HepG2 (cell line): ENCODE measurements at regions of chr16 and their contacts with region 1.

Region 1: GRCh38 chr16:56950881-56951771 is 10.6 kb upstream of the CETP start:
- DNase-seq: peak; percentile 61
- ATAC-seq: peak; percentile 72
- H3K4me3 ChIP-seq: peak overlapping the region in 1 of 3 experiments; percentile 15; a peak in 1 of 6 replicates
- H3K27ac ChIP-seq: no peak overlapping the region
- H3K4me1 ChIP-seq: peaks cover 53% of the 10 kb centered on the region
- H3K27me3 ChIP-seq: no peaks in the 10 kb centered on the region
- CTCF ChIP-seq: peak; percentile 98
- EP300 ChIP-seq: no peak
- POLR2A ChIP-seq: no peak
- RAD21 ChIP-seq: peak; percentile 90

Region 2: GRCh38 chr16:56866943-56867830 is 83.9 kb before region 1 on chr16:
- CTCF ChIA-PET with region 1: interaction called, 20 read pairs
- POLR2A ChIA-PET with region 1: no interaction called
- in situ Hi-C with region 1: loop called (anchors 5 kb)
- intact Hi-C with region 1: loop called (anchors 1 kb)
- DNase-seq: peak; percentile 70
- ATAC-seq: peak; percentile 6; the same call in 1 of the 3 replicates
- H3K4me3 ChIP-seq: peak overlapping the region in 2 of 3 experiments; percentile 29 to 50; a peak in 4 of 6 replicates
- H3K27ac ChIP-seq: no peak overlapping the region
- H3K4me1 ChIP-seq: peaks cover 56% of the 10 kb centered on the region
- H3K27me3 ChIP-seq: no peaks in the 10 kb centered on the region
- CTCF ChIP-seq: peak; percentile 74
- EP300 ChIP-seq: no peak
- POLR2A ChIP-seq: no peak
- RAD21 ChIP-seq: peak; percentile 59